PC-3 (cell line): ENCODE measurements at regions of chr16 and their contacts with region 1.

Region 1: GRCh38 chr16:47599512-47599911 is 138.4 kb downstream of the PHKB start:
- DNase-seq: no peak
- ATAC-seq: no peak
- H3K4me3 ChIP-seq: no peak overlapping the region
- H3K27ac ChIP-seq: no peak overlapping the region
- H3K4me1 ChIP-seq: no peaks in the 10 kb centered on the region
- H3K27me3 ChIP-seq: no peaks in the 10 kb centered on the region
- CTCF ChIP-seq: no peak

Region 2: GRCh38 chr16:47892999-47893398 is 293.5 kb after region 1 on chr16:
- CTCF ChIA-PET with region 1: interaction called, 10 read pairs
- POLR2A ChIA-PET with region 1: no interaction called
- intact Hi-C with region 1: no loop called
- DNase-seq: no peak
- ATAC-seq: no peak
- H3K4me3 ChIP-seq: no peak overlapping the region
- H3K27ac ChIP-seq: no peak overlapping the region
- H3K4me1 ChIP-seq: peaks cover 9% of the 10 kb centered on the region
- H3K27me3 ChIP-seq: no peaks in the 10 kb centered on the region
- CTCF ChIP-seq: no peak